ENCODE measurements at regions of chrX and their contacts with region 1.

Region 1: DNA sequence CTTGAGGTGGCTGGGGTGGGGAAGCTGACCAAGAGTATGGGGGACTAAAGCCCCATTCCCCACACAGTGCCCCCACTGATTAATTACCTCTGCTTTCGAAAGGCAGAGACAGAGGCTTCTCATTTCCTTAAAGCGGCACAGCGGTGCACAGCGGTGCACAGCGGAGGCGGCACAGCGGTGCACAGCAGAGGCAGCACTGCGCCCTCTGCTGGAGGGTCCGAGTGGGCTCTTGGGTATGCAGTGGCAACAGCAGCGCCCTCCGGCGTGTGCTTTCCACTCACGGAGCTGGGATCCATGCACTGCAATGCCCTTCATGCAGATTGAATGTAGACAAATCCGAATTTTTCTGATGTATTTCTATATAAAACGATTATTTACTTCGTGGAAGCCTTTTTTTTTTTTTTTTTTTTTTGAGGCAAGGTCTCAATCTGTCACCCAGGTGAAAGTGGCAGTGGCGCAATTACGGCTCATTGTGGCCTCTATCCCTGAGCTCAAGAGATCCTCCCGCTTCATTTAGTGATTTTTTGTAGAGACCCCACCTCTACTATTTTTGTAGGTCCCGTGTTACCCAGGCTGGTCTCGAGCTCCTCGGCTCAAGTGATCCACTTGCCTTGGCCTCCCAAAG is 19.7 kb upstream of the PRPS2 start:
- DNase-seq: peak; percentile 34 to 87 (median 68)
- ATAC-seq: peak; percentile 99
- H3K4me3 ChIP-seq: no peak overlapping the region
- H3K4me3 Mint-ChIP-seq: no peak overlapping the region
- H3K27ac ChIP-seq: no peak overlapping the region
- H3K27ac Mint-ChIP-seq: no peak overlapping the region
- H3K4me1 ChIP-seq: peaks cover 5% of the 10 kb centered on the region
- H3K4me1 Mint-ChIP-seq: peaks cover 8% of the 10 kb centered on the region
- H3K27me3 ChIP-seq: no peaks in the 10 kb centered on the region
- H3K27me3 Mint-ChIP-seq: peaks cover 10% of the 10 kb centered on the region
- CTCF ChIP-seq: peak; percentile 78

Region 2: DNA sequence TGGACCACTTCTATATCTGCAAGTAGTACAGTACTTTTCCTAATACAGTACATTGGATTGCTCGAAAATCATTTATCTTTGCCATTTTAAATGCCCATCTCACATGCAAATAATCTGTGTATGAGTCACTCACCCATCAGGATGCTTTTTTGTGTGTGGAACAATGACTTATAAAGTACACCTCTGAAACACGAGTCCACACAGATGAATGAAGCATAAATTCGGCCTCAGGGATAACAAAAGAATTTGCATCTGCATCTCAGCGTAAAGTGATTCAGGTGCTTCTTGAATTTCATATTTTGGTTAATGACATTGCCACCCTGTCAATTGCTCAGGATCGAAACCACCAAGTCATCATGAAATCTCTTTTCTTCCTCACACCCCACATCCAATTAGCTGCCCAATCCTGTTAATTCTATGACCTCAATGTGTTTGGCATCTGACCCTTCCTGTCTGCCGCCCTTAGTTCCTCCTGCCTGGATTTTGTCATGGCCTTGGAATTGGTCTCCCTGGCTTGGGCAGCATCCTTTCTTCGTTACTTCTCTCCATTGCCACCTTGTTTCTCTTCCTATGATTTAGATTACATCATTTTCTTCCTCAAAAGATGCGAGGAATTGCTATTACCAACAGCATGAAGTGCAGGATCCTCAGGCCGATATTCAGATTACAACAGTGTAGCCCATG is 1989.6 kb before region 1 on chrX:
- CTCF ChIA-PET with region 1: no interaction called
- POLR2A ChIA-PET with region 1: no interaction called
- intact Hi-C with region 1: loop called in 1 of 2 experiments (anchors 5 kb)
- DNase-seq: no peak
- ATAC-seq: no peak
- H3K4me3 ChIP-seq: no peak overlapping the region
- H3K4me3 Mint-ChIP-seq: no peak overlapping the region
- H3K27ac ChIP-seq: no peak overlapping the region
- H3K27ac Mint-ChIP-seq: no peak overlapping the region
- H3K4me1 ChIP-seq: no peaks in the 10 kb centered on the region
- H3K4me1 Mint-ChIP-seq: no peaks in the 10 kb centered on the region
- H3K27me3 ChIP-seq: no peaks in the 10 kb centered on the region
- H3K27me3 Mint-ChIP-seq: no peaks in the 10 kb centered on the region
- CTCF ChIP-seq: no peak

Region 3: DNA sequence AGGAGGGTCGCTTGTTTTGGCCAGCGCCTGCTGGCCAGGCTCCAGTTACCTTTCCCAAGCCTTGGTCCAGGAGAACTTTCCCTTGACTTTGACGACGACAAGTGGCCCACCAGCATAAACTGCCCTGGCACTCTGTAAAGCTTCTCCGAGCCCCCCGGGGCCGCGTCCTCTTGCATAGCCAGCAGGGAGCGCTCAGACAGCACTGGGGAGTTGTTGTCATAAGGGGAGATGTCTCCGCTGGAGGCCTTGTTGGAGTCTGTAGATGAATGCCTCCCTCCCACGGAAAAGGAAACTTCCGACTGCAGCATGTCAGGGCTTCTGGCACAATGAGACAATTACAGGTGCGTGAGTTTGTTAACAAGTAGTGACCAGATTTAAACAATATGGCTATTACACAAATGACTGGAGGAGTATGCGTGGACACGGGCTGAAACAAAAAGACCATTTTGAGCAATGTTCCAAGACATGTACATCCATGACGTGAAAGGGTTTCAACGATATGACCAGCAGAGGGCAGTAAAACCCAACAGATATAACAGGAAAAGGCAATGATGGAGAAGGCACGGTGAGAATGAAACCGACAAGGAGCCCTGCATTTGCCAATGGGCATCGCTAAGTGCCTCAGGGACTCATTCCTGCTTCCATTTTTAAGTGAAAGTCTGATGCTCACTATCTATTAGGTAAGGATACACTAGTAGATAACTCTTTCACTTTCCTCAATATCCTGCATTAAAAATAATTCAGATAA is 1627.5 kb before region 1 on chrX:
- CTCF ChIA-PET with region 1: no interaction called
- POLR2A ChIA-PET with region 1: no interaction called
- intact Hi-C with region 1: loop called in 1 of 2 experiments (anchors 5 kb)
- DNase-seq: peak; percentile 3 to 73 (median 36)
- ATAC-seq: peak; percentile 51
- H3K4me3 ChIP-seq: no peak overlapping the region
- H3K4me3 Mint-ChIP-seq: peak overlapping the region; percentile 49
- H3K27ac ChIP-seq: no peak overlapping the region
- H3K27ac Mint-ChIP-seq: no peak overlapping the region
- H3K4me1 ChIP-seq: no peaks in the 10 kb centered on the region
- H3K4me1 Mint-ChIP-seq: peaks cover 3% of the 10 kb centered on the region
- H3K27me3 ChIP-seq: no peaks in the 10 kb centered on the region
- H3K27me3 Mint-ChIP-seq: peaks cover 6% of the 10 kb centered on the region
- CTCF ChIP-seq: peak; percentile 53

Region 4: GRCh38 chrX:12758292-12758691 is 13.3 kb before region 1 on chrX:
- CTCF ChIA-PET with region 1: interaction called, 10 read pairs
- POLR2A ChIA-PET with region 1: no interaction called
- intact Hi-C with region 1: no loop called
- DNase-seq: no peak
- ATAC-seq: no peak
- H3K4me3 ChIP-seq: no peak overlapping the region
- H3K4me3 Mint-ChIP-seq: no peak overlapping the region
- H3K27ac ChIP-seq: no peak overlapping the region
- H3K27ac Mint-ChIP-seq: no peak overlapping the region
- H3K4me1 ChIP-seq: no peaks in the 10 kb centered on the region
- H3K4me1 Mint-ChIP-seq: no peaks in the 10 kb centered on the region
- H3K27me3 ChIP-seq: no peaks in the 10 kb centered on the region
- H3K27me3 Mint-ChIP-seq: peaks cover 5% of the 10 kb centered on the region
- CTCF ChIP-seq: no peak

Region 5: DNA sequence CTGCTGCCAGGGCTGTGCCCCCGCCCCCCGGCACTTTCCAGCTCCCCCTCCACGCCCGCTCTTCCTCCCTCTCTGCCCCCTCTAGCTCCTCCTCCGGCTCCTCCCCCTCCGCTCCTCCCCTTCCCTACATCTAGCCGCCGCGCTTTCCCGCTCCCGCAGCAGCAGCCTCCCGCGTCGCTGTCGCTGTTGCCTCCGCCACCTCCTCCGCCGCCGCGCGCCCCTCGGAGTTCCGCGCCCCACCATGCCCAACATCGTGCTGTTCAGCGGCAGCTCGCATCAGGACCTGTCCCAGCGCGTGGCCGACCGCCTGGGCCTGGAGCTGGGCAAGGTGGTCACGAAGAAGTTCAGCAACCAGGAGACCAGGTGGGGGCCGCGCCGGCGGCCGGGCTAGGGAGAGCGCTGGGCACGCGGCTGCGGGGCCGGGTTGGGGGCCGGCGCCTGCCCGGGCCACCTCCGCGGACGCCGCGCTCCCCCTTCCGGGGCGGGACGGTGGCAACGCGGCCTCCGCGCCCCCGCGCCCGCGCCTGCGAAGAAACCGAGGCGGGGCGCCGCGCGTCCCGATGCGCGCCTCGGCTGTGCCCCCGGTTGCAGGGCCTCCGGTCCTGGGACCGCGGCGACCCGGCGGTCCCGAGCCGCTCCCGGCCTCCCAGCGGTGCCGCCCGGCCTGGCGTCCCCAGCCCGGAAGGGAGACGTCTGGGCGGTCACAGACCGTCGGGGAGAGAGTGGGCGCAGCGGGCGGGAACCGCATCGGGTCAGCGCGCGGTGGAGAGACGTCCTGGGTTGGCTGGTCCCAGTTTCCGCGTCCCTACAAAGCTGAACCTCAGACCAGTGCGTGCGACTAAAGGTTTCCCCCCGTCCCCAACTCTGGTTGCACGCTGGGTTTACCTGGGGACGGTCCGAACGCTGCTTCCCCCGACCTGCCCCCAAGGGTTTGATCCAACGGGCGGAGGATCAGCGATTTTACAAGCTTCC is 20.0 kb after region 1 on chrX and contains the start of gene PRPS2:
- CTCF ChIA-PET with region 1: interaction called, 24 read pairs
- POLR2A ChIA-PET with region 1: no interaction called
- intact Hi-C with region 1: no loop called
- DNase-seq: peak; percentile 43 to 80 (median 71)
- ATAC-seq: peak; percentile 93
- H3K4me3 ChIP-seq: peak within 1 kb of the TSS; percentile 69 to 74
- H3K4me3 Mint-ChIP-seq: peak within 1 kb of the TSS; percentile 90
- H3K27ac ChIP-seq: peak within 1 kb of the TSS; percentile 39 to 52
- H3K27ac Mint-ChIP-seq: peak within 1 kb of the TSS; percentile 81
- H3K4me1 ChIP-seq: peaks cover 9% of the 10 kb centered on the region
- H3K4me1 Mint-ChIP-seq: peaks cover 26% of the 10 kb centered on the region
- H3K27me3 ChIP-seq: no peaks in the 10 kb centered on the region
- H3K27me3 Mint-ChIP-seq: no peaks in the 10 kb centered on the region
- CTCF ChIP-seq: no peak
- total RNA-seq, gene PRPS2: 10.5 to 13.4 TPM

Region 6: GRCh38 chrX:12874581-12874980 is 103.0 kb after region 1 on chrX:
- CTCF ChIA-PET with region 1: no interaction called
- POLR2A ChIA-PET with region 1: no interaction called
- intact Hi-C with region 1: no loop called
- DNase-seq: no peak
- ATAC-seq: no peak
- H3K4me3 ChIP-seq: no peak overlapping the region
- H3K4me3 Mint-ChIP-seq: no peak overlapping the region
- H3K27ac ChIP-seq: no peak overlapping the region
- H3K27ac Mint-ChIP-seq: no peak overlapping the region
- H3K4me1 ChIP-seq: no peaks in the 10 kb centered on the region
- H3K4me1 Mint-ChIP-seq: no peaks in the 10 kb centered on the region
- H3K27me3 ChIP-seq: no peaks in the 10 kb centered on the region
- H3K27me3 Mint-ChIP-seq: no peaks in the 10 kb centered on the region
- CTCF ChIP-seq: no peak

Region 7: DNA sequence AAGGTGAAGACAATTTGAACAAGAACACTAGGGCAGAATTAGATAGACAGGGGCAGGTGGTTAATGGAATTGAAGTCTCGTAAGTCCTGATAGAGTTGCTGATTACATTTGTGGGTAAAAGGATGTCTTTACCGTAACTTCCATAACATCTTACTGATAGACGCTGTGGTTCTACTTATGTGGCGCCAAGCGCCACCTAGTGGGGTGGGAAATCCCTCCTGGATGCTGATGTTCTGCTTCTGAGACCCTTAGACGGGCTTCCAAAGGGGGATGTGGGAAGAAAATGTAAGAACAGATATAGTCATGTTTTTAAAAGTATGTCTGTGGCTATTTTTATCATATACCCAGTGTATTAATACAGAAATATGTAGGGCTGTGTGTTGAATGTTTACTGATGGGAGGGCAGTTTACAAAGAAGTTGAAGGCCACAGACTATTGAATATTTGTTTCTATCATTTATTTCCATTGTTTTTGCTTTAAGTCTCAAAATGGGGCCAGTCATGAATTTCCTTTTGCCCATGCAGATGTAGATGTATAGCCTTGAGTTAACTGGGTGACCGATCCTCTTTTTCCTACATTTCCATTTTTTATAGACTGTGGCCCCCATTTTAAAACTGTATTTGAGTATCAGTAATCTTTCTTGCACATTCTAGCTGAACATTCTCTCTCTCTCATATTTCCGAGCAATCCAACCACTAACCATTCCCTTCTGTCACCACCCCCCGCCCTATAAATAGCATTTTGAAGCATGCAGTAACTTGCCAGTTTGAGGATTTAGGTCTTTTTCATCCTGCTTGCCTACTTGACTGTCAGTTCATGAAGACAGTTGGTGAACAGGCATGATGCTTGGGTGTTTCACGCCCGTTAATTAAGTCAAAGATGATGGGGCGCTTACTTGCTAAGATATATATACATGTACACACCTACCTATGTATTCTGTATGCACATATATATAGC is 122.8 kb after region 1 on chrX:
- CTCF ChIA-PET with region 1: interaction called, 3 read pairs
- POLR2A ChIA-PET with region 1: no interaction called
- intact Hi-C with region 1: loop called in 1 of 2 experiments (anchors 2 kb)
- DNase-seq: peak; percentile 4 to 64 (median 40)
- ATAC-seq: peak; percentile 49
- H3K4me3 ChIP-seq: no peak overlapping the region
- H3K4me3 Mint-ChIP-seq: no peak overlapping the region
- H3K27ac ChIP-seq: no peak overlapping the region
- H3K27ac Mint-ChIP-seq: peak overlapping the region; percentile 24
- H3K4me1 ChIP-seq: peaks cover 3% of the 10 kb centered on the region
- H3K4me1 Mint-ChIP-seq: peaks cover 25% of the 10 kb centered on the region
- H3K27me3 ChIP-seq: no peaks in the 10 kb centered on the region
- H3K27me3 Mint-ChIP-seq: no peaks in the 10 kb centered on the region
- CTCF ChIP-seq: peak; percentile 56

Measured in CD8-positive, alpha-beta T cell (primary cell).